B cell (primary cell): ENCODE measurements at regions of chr10 and their contacts with region 1.

Region 1: GRCh38 chr10:23525406-23525805 is 86.5 kb downstream of the OTUD1 start:
- DNase-seq: peak; percentile 65
- ATAC-seq: peak; percentile 68
- H3K4me3 ChIP-seq: no peak overlapping the region
- H3K4me3 Mint-ChIP-seq: no peak overlapping the region
- H3K27ac ChIP-seq: no peak overlapping the region
- H3K27ac Mint-ChIP-seq: no peak overlapping the region
- H3K4me1 ChIP-seq: peaks cover 17 to 19% of the 10 kb centered on the region in 2 donors
- H3K4me1 Mint-ChIP-seq: peaks cover 33% of the 10 kb centered on the region
- H3K27me3 ChIP-seq: no peaks in the 10 kb centered on the region
- H3K27me3 Mint-ChIP-seq: peaks cover 6% of the 10 kb centered on the region
- CTCF ChIP-seq: peak; percentile 72

Region 2: GRCh38 chr10:23540401-23541030 is 15.1 kb after region 1 on chr10:
- CTCF ChIA-PET with region 1: interaction called, 21 read pairs
- POLR2A ChIA-PET with region 1: no interaction called
- intact Hi-C with region 1: no loop called
- DNase-seq: no peak
- ATAC-seq: no peak
- H3K4me3 ChIP-seq: peak overlapping the region in 1 of 5 experiments; percentile 9
- H3K4me3 Mint-ChIP-seq: peak overlapping the region; percentile 10
- H3K27ac ChIP-seq: no peak overlapping the region
- H3K27ac Mint-ChIP-seq: no peak overlapping the region
- H3K4me1 ChIP-seq: peaks cover 9 to 16% of the 10 kb centered on the region in 2 donors
- H3K4me1 Mint-ChIP-seq: peaks cover 20% of the 10 kb centered on the region
- H3K27me3 ChIP-seq: no peaks in the 10 kb centered on the region
- H3K27me3 Mint-ChIP-seq: peaks cover 11% of the 10 kb centered on the region
- CTCF ChIP-seq: no peak

Region 3: GRCh38 chr10:23702977-23703414 is 177.6 kb after region 1 on chr10:
- CTCF ChIA-PET with region 1: no interaction called
- POLR2A ChIA-PET with region 1: no interaction called
- intact Hi-C with region 1: loop called (anchors 5 kb)
- DNase-seq: peak; percentile 56
- ATAC-seq: peak; percentile 54
- H3K4me3 ChIP-seq: no peak overlapping the region
- H3K4me3 Mint-ChIP-seq: no peak overlapping the region
- H3K27ac ChIP-seq: no peak overlapping the region
- H3K27ac Mint-ChIP-seq: no peak overlapping the region
- H3K4me1 ChIP-seq: no peaks in the 10 kb centered on the region
- H3K4me1 Mint-ChIP-seq: peaks cover 2% of the 10 kb centered on the region
- H3K27me3 ChIP-seq: peaks cover 0 to 9% (median 2%) of the 10 kb centered on the region in 4 experiments
- H3K27me3 Mint-ChIP-seq: peaks cover 43% of the 10 kb centered on the region
- CTCF ChIP-seq: peak; percentile 69

Region 4: DNA sequence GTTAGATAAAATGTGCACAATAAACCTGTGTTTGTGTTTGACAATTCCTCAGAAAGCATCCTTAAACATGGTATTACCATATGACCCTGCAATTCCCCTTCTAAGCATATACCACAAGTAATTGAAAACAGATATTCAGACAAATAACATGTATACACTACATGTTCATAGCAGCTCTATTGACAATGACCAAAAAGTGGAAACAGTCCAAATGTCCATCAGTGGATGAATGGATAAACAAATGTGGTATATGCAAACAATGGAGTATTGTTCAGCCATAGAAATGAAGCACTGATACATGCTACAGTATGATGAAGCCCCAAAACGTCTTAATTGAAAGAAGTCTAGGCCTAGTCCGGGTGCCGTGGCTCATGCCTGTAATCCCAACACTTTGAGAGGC is 193.5 kb after region 1 on chr10:
- CTCF ChIA-PET with region 1: no interaction called
- POLR2A ChIA-PET with region 1: no interaction called
- intact Hi-C with region 1: no loop called
- DNase-seq: no peak
- ATAC-seq: no peak
- H3K4me3 ChIP-seq: no peak overlapping the region
- H3K4me3 Mint-ChIP-seq: no peak overlapping the region
- H3K27ac ChIP-seq: no peak overlapping the region
- H3K27ac Mint-ChIP-seq: no peak overlapping the region
- H3K4me1 ChIP-seq: no peaks in the 10 kb centered on the region
- H3K4me1 Mint-ChIP-seq: no peaks in the 10 kb centered on the region
- H3K27me3 ChIP-seq: no peaks in the 10 kb centered on the region
- H3K27me3 Mint-ChIP-seq: peaks cover 3% of the 10 kb centered on the region
- CTCF ChIP-seq: no peak

Region 5: DNA sequence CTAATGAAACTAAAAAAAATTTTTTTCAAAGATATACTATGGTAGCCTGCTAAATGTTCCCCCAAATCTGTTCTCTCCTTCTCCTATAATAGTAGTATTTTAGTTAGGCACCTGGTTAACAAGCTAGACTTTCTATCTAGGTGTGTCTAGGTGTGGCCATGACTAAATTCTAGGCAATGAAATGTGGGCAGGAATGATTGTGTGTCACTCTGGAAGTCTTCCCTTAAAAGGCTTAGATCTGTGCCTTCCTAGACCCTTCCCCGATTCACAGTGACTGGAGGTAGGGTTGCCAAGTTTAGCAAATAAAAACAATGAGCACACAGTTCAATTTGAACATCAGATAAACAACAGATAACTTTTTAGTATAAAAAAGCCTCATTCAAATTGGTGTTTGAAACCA is 1206.5 kb after region 1 on chr10:
- CTCF ChIA-PET with region 1: no interaction called
- POLR2A ChIA-PET with region 1: no interaction called
- intact Hi-C with region 1: no loop called
- DNase-seq: no peak
- ATAC-seq: no peak
- H3K4me3 ChIP-seq: no peak overlapping the region
- H3K4me3 Mint-ChIP-seq: no peak overlapping the region
- H3K27ac ChIP-seq: no peak overlapping the region
- H3K27ac Mint-ChIP-seq: no peak overlapping the region
- H3K4me1 ChIP-seq: no peaks in the 10 kb centered on the region
- H3K4me1 Mint-ChIP-seq: no peaks in the 10 kb centered on the region
- H3K27me3 ChIP-seq: no peaks in the 10 kb centered on the region
- H3K27me3 Mint-ChIP-seq: peaks cover 8% of the 10 kb centered on the region
- CTCF ChIP-seq: no peak